ENCODE measurements at regions of chr9 and their contacts with region 1.

Region 1: GRCh38 chr9:88106491-88106890 is 31.8 kb downstream of the SPATA31C2 start:
- DNase-seq: peak in 1 of 2 donors; percentile 13
- ATAC-seq: peak in 1 of 8 donors; percentile 35
- H3K4me3 ChIP-seq: no peak overlapping the region
- H3K27ac ChIP-seq: no peak overlapping the region
- H3K4me1 ChIP-seq: no peaks in the 10 kb centered on the region
- H3K27me3 ChIP-seq: peaks cover 0 to 26% (median 6%) of the 10 kb centered on the region in 7 donors
- CTCF ChIP-seq: peak in 7 of 9 donors; percentile 43 to 62 (median 46)

Region 2: GRCh38 chr9:87950765-87951488 is 155.6 kb before region 1 on chr9:
- intact Hi-C with region 1: no loop called
- DNase-seq: no peak
- ATAC-seq: peak in 2 of 8 donors; percentile 30 to 50
- H3K4me3 ChIP-seq: no peak overlapping the region
- H3K27ac ChIP-seq: no peak overlapping the region
- H3K4me1 ChIP-seq: no peaks in the 10 kb centered on the region
- H3K27me3 ChIP-seq: peaks cover 0 to 20% (median 8%) of the 10 kb centered on the region in 7 donors
- CTCF ChIP-seq: peak; percentile 26 to 51 (median 33)

Region 3: DNA sequence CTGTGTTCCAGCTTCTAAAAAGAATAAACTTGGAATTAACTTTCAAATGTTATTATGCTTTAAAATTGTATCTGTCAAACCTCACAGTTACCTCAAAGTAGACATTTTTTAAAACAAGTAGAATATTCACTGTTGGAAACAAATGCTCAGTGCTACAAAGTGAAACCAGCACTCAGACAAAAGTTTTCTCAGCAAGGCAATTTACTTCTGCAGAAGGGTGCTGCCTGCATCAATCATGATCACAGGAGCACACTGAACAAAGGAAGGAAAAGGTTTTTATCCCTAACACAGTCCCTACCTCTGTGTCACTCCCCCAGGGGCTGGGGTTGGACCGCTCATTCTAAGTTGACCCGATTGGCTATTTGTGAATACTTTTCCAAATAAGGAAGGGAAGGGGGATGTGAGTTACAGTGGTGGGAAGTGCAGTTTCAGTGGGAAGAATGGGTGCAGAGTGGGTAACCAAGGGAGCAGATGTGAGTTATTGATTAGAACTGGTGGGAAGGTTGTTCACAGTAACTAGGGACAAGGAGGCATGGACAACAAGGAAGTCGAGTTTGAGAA is 69.1 kb before region 1 on chr9:
- intact Hi-C with region 1: no loop called
- DNase-seq: no peak
- ATAC-seq: no peak
- H3K4me3 ChIP-seq: no peak overlapping the region
- H3K27ac ChIP-seq: no peak overlapping the region
- H3K4me1 ChIP-seq: no peaks in the 10 kb centered on the region
- H3K27me3 ChIP-seq: no peaks in the 10 kb centered on the region
- CTCF ChIP-seq: no peak

Region 4: GRCh38 chr9:89278997-89279739 is 1172.7 kb after region 1 on chr9:
- intact Hi-C with region 1: loop called in 1 of 10 experiments (anchors 10 kb)
- DNase-seq: peak in 1 of 2 donors; percentile 20
- ATAC-seq: no peak
- H3K4me3 ChIP-seq: no peak overlapping the region
- H3K27ac ChIP-seq: no peak overlapping the region
- H3K4me1 ChIP-seq: peaks cover 0 to 9% (median 0%) of the 10 kb centered on the region in 9 donors
- H3K27me3 ChIP-seq: no peaks in the 10 kb centered on the region
- CTCF ChIP-seq: peak; percentile 48 to 76 (median 64)